Activated CD4-positive, alpha-beta memory T cell treated with anti-CD3 and anti-CD28 coated beads for 36 hours (primary cell): ENCODE measurements at regions of chr11 and their contacts with region 1.

Region 1: GRCh38 chr11:109853156-109853776 is 239.9 kb upstream of the ZC3H12C start:
- DNase-seq: no peak
- H3K4me3 Mint-ChIP-seq: no peak overlapping the region
- H3K27ac Mint-ChIP-seq: no peak overlapping the region
- H3K4me1 Mint-ChIP-seq: no peaks in the 10 kb centered on the region
- H3K27me3 Mint-ChIP-seq: no peaks in the 10 kb centered on the region

Region 2: DNA sequence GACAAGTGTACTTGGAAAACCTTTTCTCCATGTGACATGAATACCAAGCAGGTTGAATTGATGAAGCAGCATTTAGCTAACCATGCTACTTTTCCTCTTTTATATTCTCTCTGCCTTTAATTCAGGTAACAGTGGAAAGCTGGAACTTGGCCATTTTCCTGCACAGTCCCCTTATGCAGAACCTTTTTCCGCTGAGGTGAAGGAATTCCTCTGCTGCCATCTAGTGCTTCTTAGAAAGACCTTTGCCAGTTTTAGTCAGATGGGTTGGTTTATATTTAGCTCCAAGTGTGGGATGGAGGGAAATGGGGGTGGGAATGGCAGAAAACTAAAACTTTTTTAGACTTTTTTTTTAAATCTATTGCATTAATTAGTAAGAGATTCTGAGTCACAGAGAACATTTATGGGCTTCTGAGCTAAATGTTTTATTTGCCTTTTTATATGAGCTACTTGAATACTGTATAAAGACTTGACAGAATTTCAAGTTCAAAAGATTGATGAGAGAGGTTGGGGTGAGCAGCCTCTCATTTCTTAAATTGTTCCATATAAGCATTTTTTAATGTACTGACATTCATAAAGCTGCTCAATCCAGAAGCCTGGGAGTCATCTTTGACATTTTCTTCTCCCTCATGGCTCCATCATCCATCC is 86.0 kb after region 1 on chr11:
- CTCF ChIA-PET with region 1: interaction called, 3 read pairs
- POLR2A ChIA-PET with region 1: no interaction called
- intact Hi-C with region 1: loop called (anchors 2 kb)
- DNase-seq: no peak
- H3K4me3 Mint-ChIP-seq: no peak overlapping the region
- H3K27ac Mint-ChIP-seq: no peak overlapping the region
- H3K4me1 Mint-ChIP-seq: no peaks in the 10 kb centered on the region
- H3K27me3 Mint-ChIP-seq: peaks cover 2% of the 10 kb centered on the region